Caco-2 (cell line): ENCODE measurements at regions of chr3 and their contacts with region 1.

Region 1: GRCh38 chr3:136136454-136136853 is 59.7 kb downstream of the MSL2 start:
- DNase-seq: no peak
- H3K4me3 ChIP-seq: no peak overlapping the region
- H3K4me3 Mint-ChIP-seq: no peak overlapping the region
- H3K27ac Mint-ChIP-seq: no peak overlapping the region
- H3K4me1 ChIP-seq: peaks cover 7% of the 10 kb centered on the region
- H3K4me1 Mint-ChIP-seq: peaks cover 17% of the 10 kb centered on the region
- H3K27me3 ChIP-seq: no peaks in the 10 kb centered on the region
- H3K27me3 Mint-ChIP-seq: no peaks in the 10 kb centered on the region
- CTCF ChIP-seq: no peak

Region 2: DNA sequence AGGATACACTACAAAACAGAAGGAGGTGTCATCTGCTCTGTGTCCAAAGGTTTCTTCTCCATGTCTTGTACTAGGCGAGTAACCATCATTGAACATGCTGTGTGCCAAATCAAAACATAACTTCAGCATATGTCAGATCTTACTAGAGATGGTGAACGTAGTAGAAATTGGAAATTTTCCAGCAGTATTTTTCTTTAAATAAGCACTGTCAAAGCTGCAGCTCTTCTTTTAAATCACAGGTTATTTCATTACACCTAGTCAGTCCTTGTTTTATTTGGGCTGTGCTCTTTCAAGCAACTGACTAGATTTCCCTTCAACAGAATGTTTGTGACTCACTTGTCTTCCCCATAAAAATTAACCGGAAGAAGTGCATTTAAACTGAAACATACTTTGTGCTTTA is 13.2 kb after region 1 on chr3:
- CTCF ChIA-PET with region 1: no interaction called
- POLR2A ChIA-PET with region 1: interaction called, 10 read pairs
- intact Hi-C with region 1: no loop called
- DNase-seq: no peak
- H3K4me3 ChIP-seq: no peak overlapping the region
- H3K4me3 Mint-ChIP-seq: no peak overlapping the region
- H3K27ac Mint-ChIP-seq: no peak overlapping the region
- H3K4me1 ChIP-seq: peaks cover 22% of the 10 kb centered on the region
- H3K4me1 Mint-ChIP-seq: peaks cover 29% of the 10 kb centered on the region
- H3K27me3 ChIP-seq: no peaks in the 10 kb centered on the region
- H3K27me3 Mint-ChIP-seq: no peaks in the 10 kb centered on the region
- CTCF ChIP-seq: no peak

Region 3: GRCh38 chr3:136473716-136474326 is 337.4 kb after region 1 on chr3:
- CTCF ChIA-PET with region 1: no interaction called
- POLR2A ChIA-PET with region 1: no interaction called
- intact Hi-C with region 1: no loop called
- DNase-seq: no peak
- H3K4me3 ChIP-seq: no peak overlapping the region
- H3K4me3 Mint-ChIP-seq: no peak overlapping the region
- H3K27ac Mint-ChIP-seq: no peak overlapping the region
- H3K4me1 ChIP-seq: no peaks in the 10 kb centered on the region
- H3K4me1 Mint-ChIP-seq: peaks cover 5% of the 10 kb centered on the region
- H3K27me3 ChIP-seq: no peaks in the 10 kb centered on the region
- H3K27me3 Mint-ChIP-seq: no peaks in the 10 kb centered on the region
- CTCF ChIP-seq: no peak